GM18951 (cell line): ENCODE measurements at regions of chr20 and their contacts with region 1.

Region 1: GRCh38 chr20:35303735-35304491 is 11.7 kb upstream of the FAM83C start:
- POLR2A ChIP-seq: no peak

Region 2: DNA sequence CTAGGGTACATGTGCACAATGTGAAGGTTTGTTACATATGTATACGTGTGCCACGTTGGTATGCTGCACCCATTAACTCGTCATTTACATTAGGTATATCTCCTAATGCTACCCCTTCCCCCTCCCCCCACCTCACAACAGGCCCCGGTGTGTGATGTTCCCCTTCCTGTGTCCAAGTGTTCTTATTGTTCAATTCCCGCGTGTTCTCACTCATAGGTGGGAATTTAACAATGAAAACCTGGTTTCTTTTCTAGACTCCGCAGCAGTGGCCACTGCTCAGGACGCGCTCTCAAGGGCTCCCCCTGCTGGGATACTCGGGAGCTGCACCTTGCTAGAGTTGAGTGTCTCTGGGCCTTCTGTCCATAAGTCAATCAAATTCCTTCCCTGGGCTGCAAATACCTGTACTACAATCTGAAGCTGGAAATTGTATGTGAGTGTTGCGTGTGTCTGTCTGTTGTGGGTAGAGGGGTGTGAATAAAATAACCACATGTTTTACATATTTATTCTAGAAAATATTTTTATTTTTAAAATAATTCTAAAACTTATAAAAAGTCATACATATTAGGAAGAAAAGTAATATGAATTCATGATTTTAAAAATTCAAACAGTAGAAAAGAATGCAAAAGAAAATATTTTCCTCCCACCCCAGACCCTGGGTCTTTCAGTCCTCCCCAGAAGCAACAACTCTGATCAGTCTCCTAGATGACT is 143.3 kb after region 1 on chr20:
- in situ Hi-C with region 1: loop called (anchors 10 kb)
- POLR2A ChIP-seq: no peak